Activated CD4-positive, alpha-beta memory T cell treated with anti-CD3 and anti-CD28 coated beads for 36 hours (primary cell): ENCODE measurements at regions of chr21 and their contacts with region 1.

Region 1: DNA sequence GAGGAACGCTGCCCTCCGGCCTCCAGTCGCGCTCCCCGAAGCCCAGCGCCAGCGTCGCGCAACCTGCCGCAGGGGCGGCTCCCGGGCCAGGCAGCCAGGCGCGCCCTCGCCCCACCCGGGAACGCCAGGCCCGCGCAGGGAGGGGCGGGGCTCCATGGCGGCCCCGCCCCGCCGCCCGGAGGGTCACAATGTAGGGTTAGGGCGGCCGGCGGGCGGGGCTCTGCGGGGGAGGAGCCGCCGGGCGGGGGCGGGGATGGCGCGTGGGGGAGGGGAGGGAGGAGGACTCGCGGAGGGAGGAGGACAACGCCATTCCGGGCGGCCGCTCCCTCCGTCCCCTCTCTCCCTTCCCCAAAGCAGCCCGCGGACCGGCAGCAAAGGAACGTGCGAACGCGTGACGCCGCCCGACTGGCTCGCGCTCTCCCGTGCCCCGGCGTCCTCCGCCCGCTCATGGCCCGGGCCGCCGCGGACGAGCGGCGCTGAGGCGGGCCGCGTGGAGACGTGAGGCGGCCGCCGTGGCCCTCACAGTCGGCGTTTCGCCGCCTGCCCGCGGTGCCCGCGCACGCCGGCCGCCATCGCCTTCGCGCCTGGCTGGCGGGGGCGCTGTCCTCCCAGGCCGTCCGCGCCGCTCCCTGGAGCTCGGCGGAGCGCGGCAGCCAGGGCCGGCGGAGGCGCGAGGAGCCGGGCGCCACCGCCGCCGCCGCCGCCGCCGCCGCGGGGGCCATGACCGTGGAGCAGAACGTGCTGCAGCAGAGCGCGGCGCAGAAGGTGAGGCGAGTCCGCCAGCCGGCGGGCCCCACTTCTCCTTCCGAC is at the start of gene USP25:
- DNase-seq: peak; percentile 89
- H3K4me3 Mint-ChIP-seq: peak within 1 kb of the TSS; percentile 83
- H3K27ac Mint-ChIP-seq: peak within 1 kb of the TSS; percentile 77
- H3K4me1 Mint-ChIP-seq: peaks cover 20% of the 10 kb centered on the region
- H3K27me3 Mint-ChIP-seq: peaks cover 2% of the 10 kb centered on the region
- total RNA-seq, gene USP25: 31.2 to 31.7 TPM

Region 2: GRCh38 chr21:14675774-14676530 is 1053.9 kb before region 1 on chr21:
- CTCF ChIA-PET with region 1: no interaction called
- POLR2A ChIA-PET with region 1: no interaction called
- intact Hi-C with region 1: loop called (anchors 5 kb)
- DNase-seq: no peak
- H3K4me3 Mint-ChIP-seq: peak overlapping the region; percentile 64
- H3K27ac Mint-ChIP-seq: peak overlapping the region; percentile 94
- H3K4me1 Mint-ChIP-seq: peaks cover 32% of the 10 kb centered on the region
- H3K27me3 Mint-ChIP-seq: no peaks in the 10 kb centered on the region

Region 3: DNA sequence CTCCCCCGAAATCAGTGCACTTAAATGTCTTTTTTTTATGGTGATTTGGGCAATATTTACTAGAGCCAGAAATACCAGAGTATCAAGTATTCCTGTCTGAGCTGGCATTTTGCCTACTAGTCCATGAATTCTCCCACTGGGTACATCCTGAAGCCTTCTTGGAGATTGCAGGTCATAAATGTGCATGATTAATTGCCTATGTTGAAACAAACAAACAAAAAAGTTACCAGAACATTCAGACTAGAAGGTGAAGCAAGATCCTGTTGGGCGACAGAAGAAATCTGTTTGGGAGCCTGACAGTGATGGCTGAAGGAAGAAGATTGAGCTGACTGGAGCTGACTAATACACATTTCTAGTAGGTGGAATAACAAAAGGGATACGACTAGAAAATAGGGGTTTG is 537.6 kb before region 1 on chr21:
- CTCF ChIA-PET with region 1: no interaction called
- POLR2A ChIA-PET with region 1: no interaction called
- intact Hi-C with region 1: no loop called
- DNase-seq: no peak
- H3K4me3 Mint-ChIP-seq: no peak overlapping the region
- H3K27ac Mint-ChIP-seq: no peak overlapping the region
- H3K4me1 Mint-ChIP-seq: no peaks in the 10 kb centered on the region
- H3K27me3 Mint-ChIP-seq: no peaks in the 10 kb centered on the region

Region 4: DNA sequence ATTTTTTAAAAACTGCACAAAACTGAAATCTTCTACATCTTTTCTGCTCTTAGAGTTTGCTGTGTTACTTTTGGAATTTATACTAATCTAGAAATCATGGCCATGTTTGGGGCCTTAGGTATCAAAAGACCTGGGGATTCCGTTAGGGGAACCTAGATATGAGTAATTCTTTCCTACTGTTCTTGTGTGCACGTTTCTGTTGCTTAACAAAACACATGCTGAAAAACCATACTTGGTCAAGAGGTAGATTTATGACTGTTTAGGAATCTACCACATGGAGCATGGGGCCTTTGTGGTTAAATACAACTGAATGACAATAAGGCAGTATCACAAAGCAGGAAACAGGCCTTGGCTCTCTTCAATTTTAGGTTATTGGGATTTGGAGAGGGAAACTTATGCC is 292.0 kb before region 1 on chr21:
- CTCF ChIA-PET with region 1: no interaction called
- POLR2A ChIA-PET with region 1: no interaction called
- intact Hi-C with region 1: loop called (anchors 5 kb)
- DNase-seq: no peak
- H3K4me3 Mint-ChIP-seq: no peak overlapping the region
- H3K27ac Mint-ChIP-seq: no peak overlapping the region
- H3K4me1 Mint-ChIP-seq: peaks cover 13% of the 10 kb centered on the region
- H3K27me3 Mint-ChIP-seq: no peaks in the 10 kb centered on the region

Region 5: DNA sequence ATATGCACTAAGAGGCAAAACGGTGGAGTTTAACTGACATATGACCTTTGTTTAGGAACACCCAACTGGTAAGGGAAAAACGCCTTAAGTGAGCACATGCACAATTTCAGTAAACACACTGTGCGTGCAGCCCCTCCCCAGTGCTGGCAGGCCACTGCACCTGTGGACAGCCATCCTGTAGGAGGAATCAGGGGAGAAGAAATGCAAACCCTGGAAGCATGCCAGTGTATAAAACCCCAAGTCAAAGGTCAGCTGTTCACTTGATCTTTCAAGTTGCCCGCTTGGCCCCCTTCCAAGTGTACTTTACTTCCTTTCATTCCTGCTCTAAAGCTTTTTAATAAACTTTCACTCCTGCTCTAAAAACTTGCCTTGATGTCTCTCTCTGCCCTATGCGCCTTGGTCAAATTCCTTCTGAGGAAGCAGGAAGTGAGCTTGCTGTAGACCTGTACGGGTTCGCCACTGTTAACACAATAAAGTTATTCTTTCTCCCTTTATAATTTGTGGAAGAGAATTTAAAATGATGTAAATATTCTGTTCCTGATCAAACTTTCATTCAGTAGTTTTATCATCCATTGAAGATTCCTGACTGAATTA is 31.7 kb after region 1 on chr21:
- CTCF ChIA-PET with region 1: interaction called, 4 read pairs
- POLR2A ChIA-PET with region 1: interaction called, 3 read pairs
- intact Hi-C with region 1: loop called (anchors 2 kb)
- DNase-seq: no peak
- H3K4me3 Mint-ChIP-seq: no peak overlapping the region
- H3K27ac Mint-ChIP-seq: no peak overlapping the region
- H3K4me1 Mint-ChIP-seq: peaks cover 56% of the 10 kb centered on the region
- H3K27me3 Mint-ChIP-seq: no peaks in the 10 kb centered on the region

Region 6: DNA sequence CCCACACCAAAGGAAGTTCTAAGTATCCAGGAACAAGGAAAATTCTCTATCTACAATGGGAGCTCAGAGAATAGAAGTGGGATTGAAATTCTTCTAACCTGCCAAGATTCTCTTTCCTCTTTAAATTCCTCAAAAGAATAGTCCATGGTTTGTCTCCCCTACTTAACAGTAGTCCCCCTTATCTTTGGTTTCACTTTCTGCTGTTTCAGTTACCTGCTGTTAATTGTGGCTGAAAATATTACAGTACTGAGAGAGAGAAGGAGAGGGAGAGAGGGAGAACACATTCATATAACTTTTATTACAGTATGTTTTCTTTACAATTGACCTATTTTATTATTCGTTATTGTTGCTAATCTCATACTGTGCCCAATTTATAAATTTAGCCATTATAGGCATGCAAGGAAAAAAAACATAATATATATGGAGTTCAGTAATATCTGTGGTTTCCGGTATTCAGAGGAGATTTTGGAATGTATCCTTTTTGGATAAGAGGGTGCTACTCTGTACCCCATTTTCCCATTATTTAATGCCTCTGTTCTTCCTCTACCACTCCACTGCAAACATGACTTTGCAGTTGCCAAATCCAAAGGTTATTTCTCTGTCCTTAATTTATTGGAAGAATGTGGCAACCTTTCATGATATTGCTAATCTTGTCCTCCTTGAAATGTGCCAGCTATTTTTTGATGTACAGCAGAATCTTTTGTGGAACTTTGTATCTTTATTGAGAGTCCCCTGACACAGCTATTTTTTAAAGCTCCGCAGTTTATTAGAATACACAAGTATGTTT is 67.9 kb after region 1 on chr21:
- CTCF ChIA-PET with region 1: no interaction called
- POLR2A ChIA-PET with region 1: interaction called, 3 read pairs
- intact Hi-C with region 1: loop called (anchors 1 kb)
- DNase-seq: no peak
- H3K4me3 Mint-ChIP-seq: no peak overlapping the region
- H3K27ac Mint-ChIP-seq: no peak overlapping the region
- H3K4me1 Mint-ChIP-seq: peaks cover 63% of the 10 kb centered on the region
- H3K27me3 Mint-ChIP-seq: no peaks in the 10 kb centered on the region

Region 7: GRCh38 chr21:15826147-15826780 is 96.4 kb after region 1 on chr21:
- CTCF ChIA-PET with region 1: interaction called, 4 read pairs
- POLR2A ChIA-PET with region 1: no interaction called
- intact Hi-C with region 1: loop called (anchors 2 kb)
- DNase-seq: no peak
- H3K4me3 Mint-ChIP-seq: no peak overlapping the region
- H3K27ac Mint-ChIP-seq: no peak overlapping the region
- H3K4me1 Mint-ChIP-seq: peaks cover 22% of the 10 kb centered on the region
- H3K27me3 Mint-ChIP-seq: no peaks in the 10 kb centered on the region